ENCODE measurements at regions of chr1 and their contacts with region 1.

Region 1: GRCh38 chr1:54671985-54672608 is 30.5 kb downstream of the MROH7 start:
- DNase-seq: peak; percentile 66
- H3K4me3 Mint-ChIP-seq: no peak overlapping the region
- H3K27ac Mint-ChIP-seq: no peak overlapping the region
- H3K4me1 Mint-ChIP-seq: peaks cover 8% of the 10 kb centered on the region
- H3K27me3 Mint-ChIP-seq: peaks cover under 1% of the 10 kb centered on the region
- CTCF ChIP-seq: peak; percentile 92

Region 2: GRCh38 chr1:54810100-54810942 is 138.2 kb after region 1 on chr1:
- CTCF ChIA-PET with region 1: interaction called, 8 read pairs
- POLR2A ChIA-PET with region 1: no interaction called
- intact Hi-C with region 1: loop called (anchors 1 kb)
- DNase-seq: peak; percentile 69
- H3K4me3 Mint-ChIP-seq: no peak overlapping the region
- H3K27ac Mint-ChIP-seq: no peak overlapping the region
- H3K4me1 Mint-ChIP-seq: peaks cover 9% of the 10 kb centered on the region
- H3K27me3 Mint-ChIP-seq: no peaks in the 10 kb centered on the region
- CTCF ChIP-seq: peak; percentile 89